Heart left ventricle (tissue), 16 donors: ENCODE measurements at regions of chr14 and their contacts with region 1.

Region 1: DNA sequence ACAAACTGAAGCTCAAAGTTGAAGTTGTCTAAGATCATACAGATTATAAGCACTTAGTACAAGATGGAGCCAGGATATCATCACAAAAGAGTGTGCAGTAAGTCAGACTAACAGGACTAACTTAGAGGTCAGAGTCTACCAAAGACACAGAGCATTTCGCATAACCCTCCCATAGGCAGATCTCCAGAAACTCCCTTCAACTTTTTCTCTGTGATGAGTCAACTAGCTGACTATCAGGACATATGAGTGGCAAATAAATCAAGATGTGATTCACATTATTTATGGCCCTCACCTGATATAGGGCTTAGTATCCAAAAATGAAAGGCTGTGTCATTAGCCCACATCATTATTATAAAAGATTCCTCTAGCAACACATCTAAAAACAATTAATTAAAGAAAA is 484.6 kb downstream of the GALC start:
- DNase-seq: no peak
- ATAC-seq: no peak
- H3K4me3 ChIP-seq: no peak overlapping the region
- H3K27ac ChIP-seq: no peak overlapping the region
- H3K4me1 ChIP-seq: no peaks in the 10 kb centered on the region
- H3K27me3 ChIP-seq: no peaks in the 10 kb centered on the region
- CTCF ChIP-seq: no peak
- POLR2A ChIP-seq: no peak

Region 2: GRCh38 chr14:86973177-86973576 is 535.2 kb before region 1 on chr14:
- intact Hi-C with region 1: loop called in 1 of 10 experiments (anchors 5 kb)
- DNase-seq: no peak
- ATAC-seq: no peak
- H3K4me3 ChIP-seq: no peak overlapping the region
- H3K27ac ChIP-seq: no peak overlapping the region
- H3K4me1 ChIP-seq: no peaks in the 10 kb centered on the region
- H3K27me3 ChIP-seq: no peaks in the 10 kb centered on the region
- CTCF ChIP-seq: no peak
- POLR2A ChIP-seq: no peak

Region 3: DNA sequence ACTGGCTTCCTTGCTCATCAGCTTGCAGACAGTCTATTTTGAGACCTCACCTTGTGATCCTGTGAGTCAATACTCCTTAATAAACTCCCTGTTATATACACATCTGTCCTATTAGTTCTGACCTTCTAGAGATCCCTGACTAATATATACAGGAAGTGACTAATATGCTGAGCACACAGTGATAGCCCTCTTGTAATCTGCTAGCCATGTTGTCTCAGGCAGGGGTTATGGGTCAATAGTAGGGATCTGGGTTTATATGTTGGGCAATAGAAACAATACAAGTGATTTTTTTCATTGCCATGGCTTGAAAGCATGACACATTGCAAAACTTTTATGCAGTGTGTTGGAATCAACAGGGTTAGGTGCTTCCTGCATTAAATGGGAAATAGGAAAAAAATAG is 77.5 kb before region 1 on chr14:
- intact Hi-C with region 1: no loop called
- DNase-seq: no peak
- ATAC-seq: peak in 2 of 4 donors; percentile 38 to 53
- H3K4me3 ChIP-seq: no peak overlapping the region
- H3K27ac ChIP-seq: no peak overlapping the region
- H3K4me1 ChIP-seq: no peaks in the 10 kb centered on the region
- H3K27me3 ChIP-seq: no peaks in the 10 kb centered on the region
- CTCF ChIP-seq: no peak
- POLR2A ChIP-seq: no peak

Region 4: DNA sequence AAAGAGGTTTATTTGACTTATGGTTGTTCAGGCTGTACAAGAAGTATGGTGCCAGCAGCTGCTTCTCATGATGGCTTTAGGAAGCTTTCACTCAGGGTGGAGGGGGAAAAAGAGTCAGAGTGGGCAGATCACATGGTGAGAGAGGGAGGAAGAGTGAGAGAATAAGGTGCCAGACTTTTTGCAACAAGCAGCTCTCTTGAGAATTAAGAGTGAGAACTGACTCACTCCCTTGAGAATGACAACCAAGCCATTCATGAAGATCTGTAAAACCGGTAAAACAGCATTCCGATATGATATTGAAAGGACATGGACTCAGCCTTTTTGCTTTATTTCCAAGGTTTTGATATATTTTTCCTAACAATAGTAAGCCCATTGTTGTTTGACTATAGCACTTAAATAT is 16.5 kb before region 1 on chr14:
- intact Hi-C with region 1: no loop called
- DNase-seq: no peak
- ATAC-seq: no peak
- H3K4me3 ChIP-seq: no peak overlapping the region
- H3K27ac ChIP-seq: no peak overlapping the region
- H3K4me1 ChIP-seq: no peaks in the 10 kb centered on the region
- H3K27me3 ChIP-seq: no peaks in the 10 kb centered on the region
- CTCF ChIP-seq: no peak
- POLR2A ChIP-seq: no peak

Region 5: DNA sequence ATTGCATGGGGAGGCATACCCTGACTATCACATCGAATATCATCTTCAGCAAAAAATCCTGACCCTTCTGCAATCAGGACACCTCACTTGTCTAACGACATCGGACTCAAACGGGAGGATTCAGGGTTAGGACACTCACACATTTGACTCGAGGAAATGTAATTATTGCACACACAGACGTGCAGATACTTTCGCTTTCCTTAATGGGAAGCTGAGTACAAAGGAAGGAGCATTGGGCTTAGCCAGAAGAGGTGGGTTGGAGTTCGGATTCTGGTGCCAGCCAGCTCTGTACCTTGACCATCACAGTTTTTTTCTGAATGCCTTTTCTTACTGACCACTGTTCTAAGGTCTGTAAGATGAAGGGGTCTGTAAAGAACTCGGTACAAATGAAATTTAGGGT is 224.2 kb after region 1 on chr14:
- intact Hi-C with region 1: no loop called
- DNase-seq: no peak
- ATAC-seq: no peak
- H3K4me3 ChIP-seq: no peak overlapping the region
- H3K27ac ChIP-seq: no peak overlapping the region
- H3K4me1 ChIP-seq: no peaks in the 10 kb centered on the region
- H3K27me3 ChIP-seq: no peaks in the 10 kb centered on the region
- CTCF ChIP-seq: no peak
- POLR2A ChIP-seq: no peak